Activated T-helper 1 cell treated with anti-CD3 and anti-CD28 coated beads, Interleukin-12 subunit alpha, Interleukin-12 subunit beta, Interleukin-2, Interleukin-4 antibody, amounts not matched to agents 30 ng/mL and 10 ng/mL and 1 ng/mL, durations not matched to agents 14 hours and 24 hours and 36 hours (primary cell): ENCODE measurements at regions of chr3 and their contacts with region 1.

Region 1: DNA sequence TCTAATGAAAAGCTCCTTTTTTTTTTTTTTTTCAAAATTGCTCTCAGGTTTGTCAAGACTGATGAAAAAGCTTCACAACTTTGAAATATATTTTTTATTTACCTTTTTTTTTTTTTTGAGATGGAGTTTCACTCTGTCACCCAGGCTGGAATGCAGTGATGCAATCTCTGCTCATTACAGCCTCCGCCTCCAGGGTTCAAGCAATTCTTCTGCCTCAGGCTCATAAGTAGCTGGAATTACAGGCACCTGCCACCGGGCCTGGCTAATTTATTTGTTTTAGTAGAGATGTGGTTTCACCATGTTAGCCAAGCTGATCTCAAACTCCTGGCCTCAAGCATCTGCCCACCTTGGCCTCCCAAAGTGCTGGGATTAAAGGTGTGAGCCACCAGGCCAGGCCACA is 1515.0 kb downstream of the OTOL1 start:
- DNase-seq: no peak
- H3K4me3 Mint-ChIP-seq: no peak overlapping the region
- H3K27ac Mint-ChIP-seq: no peak overlapping the region
- H3K4me1 Mint-ChIP-seq: no peaks in the 10 kb centered on the region
- H3K27me3 Mint-ChIP-seq: no peaks in the 10 kb centered on the region

Region 2: DNA sequence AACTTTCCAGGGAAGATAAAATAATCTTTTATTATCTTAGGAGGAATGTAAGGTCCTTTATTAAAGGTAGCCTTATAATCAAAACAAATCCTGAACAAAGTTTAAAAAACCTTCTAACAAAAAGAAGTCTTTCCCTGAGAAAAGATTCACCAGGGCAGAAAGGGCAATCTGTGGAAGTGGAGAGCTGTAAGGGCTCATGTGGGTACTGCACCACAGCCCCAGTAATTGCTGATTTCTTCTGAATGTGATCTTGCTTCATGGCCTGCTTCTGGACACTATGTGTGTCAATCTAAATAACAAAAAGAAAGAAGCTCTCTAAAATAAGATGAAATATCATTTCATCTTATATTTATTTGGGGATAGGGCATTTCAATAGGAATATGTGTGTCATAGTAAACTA is 13.4 kb before region 1 on chr3:
- intact Hi-C with region 1: loop called (anchors 1 kb)
- DNase-seq: no peak
- H3K4me3 Mint-ChIP-seq: no peak overlapping the region
- H3K27ac Mint-ChIP-seq: no peak overlapping the region
- H3K4me1 Mint-ChIP-seq: no peaks in the 10 kb centered on the region
- H3K27me3 Mint-ChIP-seq: no peaks in the 10 kb centered on the region

Region 3: GRCh38 chr3:163167352-163167751 is 155.8 kb after region 1 on chr3:
- intact Hi-C with region 1: no loop called
- DNase-seq: no peak
- H3K4me3 Mint-ChIP-seq: no peak overlapping the region
- H3K27ac Mint-ChIP-seq: no peak overlapping the region
- H3K4me1 Mint-ChIP-seq: no peaks in the 10 kb centered on the region
- H3K27me3 Mint-ChIP-seq: no peaks in the 10 kb centered on the region